ENCODE measurements at regions of chr1 and their contacts with region 1.

Region 1: DNA sequence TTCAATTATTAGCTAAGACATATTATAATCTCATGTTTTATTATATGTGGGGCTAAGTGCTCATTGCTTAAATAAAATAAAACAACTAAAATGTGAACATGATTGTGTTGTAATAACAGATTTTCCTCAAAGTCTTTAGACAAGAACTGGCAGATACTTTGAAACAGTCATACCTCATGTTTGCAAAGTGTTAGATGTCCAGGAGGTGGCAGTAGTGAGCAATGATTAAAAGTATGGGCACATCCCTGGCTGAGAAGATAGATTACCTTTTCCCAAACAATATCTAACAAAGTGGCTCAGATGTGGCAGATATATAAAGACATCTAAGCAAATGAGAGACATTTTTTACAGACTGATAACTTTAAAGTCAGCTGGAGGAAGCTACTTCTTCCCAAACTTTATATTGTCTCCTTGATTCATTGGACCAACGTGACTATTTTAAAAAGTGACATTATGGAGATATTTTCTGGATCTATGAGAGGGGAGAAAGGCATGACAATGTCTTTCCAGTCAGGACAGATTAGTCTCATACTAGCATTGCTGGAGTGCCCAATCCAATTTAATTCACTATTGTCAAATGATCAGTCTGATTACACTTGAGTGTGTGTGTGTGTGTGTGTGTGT is 269.8 kb downstream of the S1PR1 start:
- DNase-seq: peak in 1 of 2 experiments; percentile 48
- H3K4me3 ChIP-seq: no peak overlapping the region
- H3K27ac ChIP-seq: no peak overlapping the region
- H3K4me1 ChIP-seq: no peaks in the 10 kb centered on the region
- H3K27me3 ChIP-seq: no peaks in the 10 kb centered on the region
- CTCF ChIP-seq: peak in 2 of 3 experiments; percentile 39 to 73; a peak in 3 of 4 replicates
- EP300 ChIP-seq: no peak
- POLR2A ChIP-seq: no peak
- RAD21 ChIP-seq: peak; percentile 47 to 50

Region 2: DNA sequence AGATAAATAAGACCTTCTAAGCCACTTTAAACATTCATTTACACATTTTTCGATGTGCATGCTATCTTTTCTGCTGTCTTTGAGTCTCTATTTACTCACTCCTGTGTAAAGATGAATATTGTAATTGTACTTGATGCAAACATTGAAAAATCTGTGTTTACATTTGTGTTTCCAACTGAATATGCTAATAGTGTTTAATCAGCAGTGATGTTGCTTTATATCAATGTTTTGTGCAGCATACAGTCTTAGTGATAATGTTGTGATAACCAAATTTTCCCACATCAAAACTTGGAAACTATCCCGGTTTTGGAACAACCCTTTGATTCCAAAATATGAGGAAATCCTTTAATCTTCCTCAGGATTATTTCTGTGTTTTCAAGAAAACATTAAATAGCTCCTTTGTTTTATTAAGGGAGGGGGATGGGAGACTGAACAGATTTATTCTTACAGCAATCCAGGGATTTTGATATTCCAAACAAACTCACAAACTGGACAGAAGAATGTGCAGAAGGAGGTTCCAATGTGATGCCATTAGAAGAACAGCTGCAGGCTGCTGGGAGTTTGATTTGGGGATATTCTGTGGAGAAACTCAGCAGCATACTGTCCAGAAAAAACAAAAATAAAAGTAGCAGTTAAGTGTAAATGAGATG is 21.8 kb before region 1 on chr1:
- CTCF ChIA-PET with region 1: interaction called, 26 read pairs
- POLR2A ChIA-PET with region 1: no interaction called
- DNase-seq: no peak
- H3K4me3 ChIP-seq: no peak overlapping the region
- H3K27ac ChIP-seq: no peak overlapping the region
- H3K4me1 ChIP-seq: peaks cover 0 to 7% (median 0%) of the 10 kb centered on the region in 4 experiments; a peak in 2 of 7 replicates
- H3K27me3 ChIP-seq: no peaks in the 10 kb centered on the region
- CTCF ChIP-seq: no peak
- EP300 ChIP-seq: no peak
- POLR2A ChIP-seq: no peak
- RAD21 ChIP-seq: no peak

Region 3: DNA sequence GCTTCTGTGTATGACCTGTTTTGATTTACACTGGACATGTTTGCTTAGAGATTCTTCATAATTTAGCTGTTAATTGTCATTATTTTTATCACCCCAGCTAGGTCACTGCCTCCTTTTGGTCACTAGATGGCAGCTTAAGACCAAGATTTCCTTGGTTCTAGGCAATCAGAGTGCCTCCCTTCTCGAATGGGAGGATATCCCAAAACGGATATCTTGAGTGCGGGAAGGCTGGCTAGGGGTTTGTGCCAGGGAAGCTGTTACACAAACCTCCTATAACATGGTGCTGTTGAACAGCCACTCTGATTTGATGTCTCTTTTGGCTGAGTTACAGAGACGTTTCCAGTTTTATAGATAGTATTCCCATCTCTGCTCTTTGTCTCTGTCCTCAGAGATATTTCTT is 13.6 kb after region 1 on chr1:
- CTCF ChIA-PET with region 1: interaction called, 20 read pairs
- POLR2A ChIA-PET with region 1: no interaction called
- DNase-seq: peak; percentile 15 to 45
- H3K4me3 ChIP-seq: no peak overlapping the region
- H3K27ac ChIP-seq: no peak overlapping the region
- H3K4me1 ChIP-seq: no peaks in the 10 kb centered on the region
- H3K27me3 ChIP-seq: peaks cover 0 to 1% (median 0%) of the 10 kb centered on the region in 4 experiments; a peak in 1 of 7 replicates
- CTCF ChIP-seq: peak in 2 of 3 experiments; percentile 67 to 82; a peak in 3 of 4 replicates
- EP300 ChIP-seq: no peak
- POLR2A ChIP-seq: no peak
- RAD21 ChIP-seq: peak; percentile 90 to 91

Region 4: GRCh38 chr1:101526813-101527212 is 20.2 kb after region 1 on chr1:
- CTCF ChIA-PET with region 1: interaction called, 20 read pairs
- POLR2A ChIA-PET with region 1: no interaction called
- DNase-seq: no peak
- H3K4me3 ChIP-seq: no peak overlapping the region
- H3K27ac ChIP-seq: no peak overlapping the region
- H3K4me1 ChIP-seq: no peaks in the 10 kb centered on the region
- H3K27me3 ChIP-seq: peaks cover 0 to 1% (median 0%) of the 10 kb centered on the region in 4 experiments; a peak in 1 of 7 replicates
- CTCF ChIP-seq: no peak
- EP300 ChIP-seq: no peak
- POLR2A ChIP-seq: no peak
- RAD21 ChIP-seq: no peak

Region 5: GRCh38 chr1:101797740-101798139 is 291.1 kb after region 1 on chr1:
- CTCF ChIA-PET with region 1: no interaction called
- POLR2A ChIA-PET with region 1: no interaction called
- DNase-seq: no peak
- H3K4me3 ChIP-seq: no peak overlapping the region
- H3K27ac ChIP-seq: no peak overlapping the region
- H3K4me1 ChIP-seq: no peaks in the 10 kb centered on the region
- H3K27me3 ChIP-seq: no peaks in the 10 kb centered on the region
- CTCF ChIP-seq: no peak
- EP300 ChIP-seq: no peak
- POLR2A ChIP-seq: no peak
- RAD21 ChIP-seq: no peak